Transverse colon (tissue), 4 donors: ENCODE measurements at regions of chr4 and their contacts with region 1.

Region 1: GRCh38 chr4:26936284-26937065 is 75.8 kb downstream of the STIM2 start:
- DNase-seq: no peak
- H3K4me3 ChIP-seq: no peak overlapping the region
- H3K27ac ChIP-seq: no peak overlapping the region
- H3K4me1 ChIP-seq: peaks cover 0 to 27% (median 0%) of the 10 kb centered on the region in 4 donors
- H3K27me3 ChIP-seq: no peaks in the 10 kb centered on the region
- CTCF ChIP-seq: no peak
- EP300 ChIP-seq: no peak
- POLR2A ChIP-seq: no peak

Region 2: GRCh38 chr4:26762650-26763049 is 173.8 kb before region 1 on chr4:
- in situ Hi-C with region 1: no loop called
- intact Hi-C with region 1: no loop called
- DNase-seq: peak; percentile 17
- H3K4me3 ChIP-seq: no peak overlapping the region
- H3K27ac ChIP-seq: peak overlapping the region in 2 of 4 donors; percentile 18 to 36
- H3K4me1 ChIP-seq: peaks cover 0 to 20% (median 6%) of the 10 kb centered on the region in 4 donors
- H3K27me3 ChIP-seq: no peaks in the 10 kb centered on the region
- CTCF ChIP-seq: no peak
- EP300 ChIP-seq: no peak
- POLR2A ChIP-seq: no peak

Region 3: DNA sequence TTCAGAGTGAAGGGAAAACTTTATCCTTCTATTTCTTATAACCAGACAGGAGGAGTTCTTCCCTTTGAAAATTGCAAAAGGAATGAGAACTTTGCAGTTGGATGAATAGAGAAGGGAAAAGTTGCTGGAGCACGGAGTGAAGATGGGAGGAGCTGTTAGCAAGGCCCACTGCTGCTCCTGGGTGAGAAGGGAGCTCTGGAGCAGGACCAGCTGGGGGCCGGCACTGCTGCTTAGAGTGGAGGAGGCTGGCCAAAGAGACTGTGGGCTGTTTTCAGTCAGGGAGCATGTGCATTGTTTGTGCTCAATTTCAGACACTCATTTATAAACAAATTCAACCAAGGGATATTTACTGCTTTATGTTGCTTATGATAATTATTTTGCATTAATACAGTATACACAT is 88.3 kb after region 1 on chr4:
- in situ Hi-C with region 1: no loop called
- intact Hi-C with region 1: no loop called
- DNase-seq: no peak
- H3K4me3 ChIP-seq: no peak overlapping the region
- H3K27ac ChIP-seq: no peak overlapping the region
- H3K4me1 ChIP-seq: no peaks in the 10 kb centered on the region
- H3K27me3 ChIP-seq: no peaks in the 10 kb centered on the region
- CTCF ChIP-seq: no peak
- EP300 ChIP-seq: no peak
- POLR2A ChIP-seq: no peak

Region 4: GRCh38 chr4:28334249-28334648 is 1397.8 kb after region 1 on chr4:
- in situ Hi-C with region 1: no loop called
- intact Hi-C with region 1: loop called (anchors 5 kb)
- DNase-seq: no peak
- H3K4me3 ChIP-seq: no peak overlapping the region
- H3K27ac ChIP-seq: no peak overlapping the region
- H3K4me1 ChIP-seq: no peaks in the 10 kb centered on the region
- H3K27me3 ChIP-seq: no peaks in the 10 kb centered on the region
- CTCF ChIP-seq: no peak
- EP300 ChIP-seq: no peak
- POLR2A ChIP-seq: no peak